ENCODE measurements at regions of chr2 and their contacts with region 1.

Region 1: GRCh38 chr2:240739797-240740196 is 48.1 kb downstream of the AQP12A start:
- DNase-seq: no peak
- H3K4me3 ChIP-seq: no peak overlapping the region
- H3K27ac ChIP-seq: peak overlapping the region in 1 of 59 donors; percentile 18
- H3K27me3 ChIP-seq: no peaks in the 10 kb centered on the region
- CTCF ChIP-seq: no peak

Region 2: DNA sequence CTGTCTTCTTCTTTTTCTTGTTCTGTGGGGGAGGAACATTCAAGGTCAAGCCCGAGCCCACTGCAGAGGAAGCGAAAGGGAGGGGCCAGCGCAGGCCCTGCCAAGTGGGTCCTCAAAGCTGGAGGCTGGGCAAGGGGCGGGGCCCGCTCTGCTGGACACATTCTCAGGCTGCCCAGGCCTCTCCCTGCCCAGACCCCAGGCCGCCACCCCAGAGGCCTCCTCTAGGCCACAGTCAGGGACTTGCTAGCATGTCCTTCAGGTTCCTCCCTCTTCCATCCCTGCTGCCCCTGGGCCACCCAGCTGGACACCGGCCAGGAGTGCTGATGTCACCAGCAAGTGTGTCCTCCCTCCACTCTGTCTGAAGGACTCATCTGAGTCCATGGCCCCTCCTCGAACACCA is 36.1 kb after region 1 on chr2:
- intact Hi-C with region 1: no loop called
- DNase-seq: no peak
- H3K4me3 ChIP-seq: no peak overlapping the region
- H3K27ac ChIP-seq: peak overlapping the region in 20 of 59 donors; percentile 3 to 62 (median 32)
- H3K27me3 ChIP-seq: no peaks in the 10 kb centered on the region
- CTCF ChIP-seq: no peak

Region 3: GRCh38 chr2:240791821-240792628 is 52.2 kb after region 1 on chr2:
- intact Hi-C with region 1: loop called in 1 of 2 experiments (anchors 5 kb)
- DNase-seq: peak in 5 of 10 donors; percentile 33 to 60 (median 45)
- H3K4me3 ChIP-seq: peak overlapping the region in 4 of 59 donors; percentile 3 to 27 (median 14)
- H3K27ac ChIP-seq: peak overlapping the region in 47 of 59 donors; percentile 24 to 77 (median 60)
- H3K27me3 ChIP-seq: no peaks in the 10 kb centered on the region
- CTCF ChIP-seq: no peak

Measured in dorsolateral prefrontal cortex (tissue), 120 donors.